HEK293T (cell line): ENCODE measurements at regions of chr13 and their contacts with region 1.

Region 1: GRCh38 chr13:75432045-75432444 is 49.9 kb downstream of the TBC1D4 start:
- DNase-seq: no peak

Region 2: GRCh38 chr13:75442736-75443234 is 10.7 kb after region 1 on chr13:
- CTCF ChIA-PET with region 1: interaction called, 13 read pairs
- POLR2A ChIA-PET with region 1: interaction called, 4 read pairs
- DNase-seq: peak; percentile 63